Heart right ventricle (tissue), 16 donors: ENCODE measurements at regions of chr1 and their contacts with region 1.

Region 1: GRCh38 chr1:43073490-43074230 is 98.4 kb downstream of the EBNA1BP2 start:
- DNase-seq: peak; percentile 45 to 77
- ATAC-seq: peak; percentile 79 to 94 (median 91)
- H3K4me3 ChIP-seq: no peak overlapping the region
- H3K27ac ChIP-seq: peak overlapping the region in 1 of 10 donors; percentile 30
- H3K4me1 ChIP-seq: peaks cover 0 to 2% (median 0%) of the 10 kb centered on the region in 9 donors
- H3K27me3 ChIP-seq: peaks cover 0 to 5% (median 0%) of the 10 kb centered on the region in 7 donors
- CTCF ChIP-seq: peak; percentile 74 to 92 (median 88)

Region 2: GRCh38 chr1:42576935-42577334 is 496.7 kb before region 1 on chr1:
- intact Hi-C with region 1: loop called in 7 of 10 experiments (anchors 5 to 10 kb)
- DNase-seq: no peak
- ATAC-seq: no peak
- H3K4me3 ChIP-seq: no peak overlapping the region
- H3K27ac ChIP-seq: no peak overlapping the region
- H3K4me1 ChIP-seq: no peaks in the 10 kb centered on the region
- H3K27me3 ChIP-seq: no peaks in the 10 kb centered on the region
- CTCF ChIP-seq: no peak

Region 3: DNA sequence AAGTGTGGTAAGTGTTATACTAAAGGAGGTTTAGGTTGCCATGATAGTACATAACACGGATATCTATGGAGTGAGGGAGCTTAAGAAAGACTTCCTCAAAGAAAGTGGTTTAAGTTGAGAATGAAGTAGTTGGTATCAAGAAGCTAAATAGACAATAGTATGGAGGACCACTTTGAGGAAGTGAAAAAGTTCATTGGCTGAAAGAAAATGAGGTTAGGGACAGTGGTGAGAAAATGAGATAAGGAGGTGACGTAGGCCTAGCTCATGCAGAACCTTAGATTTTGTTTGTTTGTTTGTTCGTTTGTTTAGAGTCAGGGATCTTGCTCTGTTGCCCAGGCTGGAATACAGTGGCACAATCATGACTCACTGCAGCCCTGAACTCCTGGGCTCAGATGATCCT is 487.6 kb before region 1 on chr1:
- intact Hi-C with region 1: loop called in 2 of 10 experiments (anchors 10 kb)
- DNase-seq: no peak
- ATAC-seq: no peak
- H3K4me3 ChIP-seq: no peak overlapping the region
- H3K27ac ChIP-seq: no peak overlapping the region
- H3K4me1 ChIP-seq: no peaks in the 10 kb centered on the region
- H3K27me3 ChIP-seq: no peaks in the 10 kb centered on the region
- CTCF ChIP-seq: no peak

Region 4: GRCh38 chr1:42613803-42614131 is 459.9 kb before region 1 on chr1:
- intact Hi-C with region 1: no loop called
- DNase-seq: no peak
- ATAC-seq: no peak
- H3K4me3 ChIP-seq: no peak overlapping the region
- H3K27ac ChIP-seq: no peak overlapping the region
- H3K4me1 ChIP-seq: no peaks in the 10 kb centered on the region
- H3K27me3 ChIP-seq: no peaks in the 10 kb centered on the region
- CTCF ChIP-seq: no peak

Region 5: GRCh38 chr1:42777852-42778251 is 295.8 kb before region 1 on chr1:
- intact Hi-C with region 1: loop called in 9 of 10 experiments (anchors 1 to 10 kb)
- DNase-seq: no peak
- ATAC-seq: peak in 5 of 8 donors; percentile 59 to 70 (median 63)
- H3K4me3 ChIP-seq: no peak overlapping the region
- H3K27ac ChIP-seq: no peak overlapping the region
- H3K4me1 ChIP-seq: no peaks in the 10 kb centered on the region
- H3K27me3 ChIP-seq: no peaks in the 10 kb centered on the region
- CTCF ChIP-seq: peak; percentile 32 to 68 (median 62)

Region 6: DNA sequence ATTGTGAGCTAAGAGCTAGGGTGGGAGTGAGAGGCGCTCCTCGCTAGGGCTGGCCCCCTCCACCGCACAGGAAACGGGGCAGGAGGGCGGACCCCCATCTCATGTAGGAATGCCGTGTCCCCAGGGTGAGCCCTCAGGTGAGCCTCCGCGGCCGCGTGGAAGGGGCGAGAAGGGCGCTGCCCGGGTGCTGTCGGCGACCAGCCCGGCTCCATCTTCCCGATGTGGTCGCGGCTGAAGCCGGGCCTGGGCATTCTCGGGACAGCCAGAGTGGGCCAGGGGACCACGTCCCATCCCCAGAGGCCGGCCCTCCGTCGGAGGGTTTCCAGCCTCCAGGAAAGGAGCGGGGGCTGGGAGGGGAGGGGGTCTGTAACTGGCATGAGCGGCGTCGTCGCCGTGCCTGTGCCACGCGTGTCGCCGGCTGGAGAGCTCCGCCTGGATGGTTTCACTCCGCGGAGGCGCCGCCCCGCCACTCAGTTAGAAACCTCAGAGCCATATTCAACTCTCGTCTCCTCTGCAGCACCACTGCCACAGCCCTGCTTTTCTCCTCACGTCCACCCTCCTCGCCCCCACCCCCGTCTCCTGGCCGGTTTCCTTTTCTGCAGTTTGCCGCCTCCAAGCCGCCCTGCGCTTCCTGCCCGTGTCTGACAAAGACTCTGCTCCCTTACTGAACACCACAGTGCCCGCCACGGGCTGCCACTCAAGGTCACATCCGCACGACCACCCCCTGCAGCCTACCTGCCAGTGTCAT is 288.5 kb before region 1 on chr1 and contains the start of gene TMEM269:
- intact Hi-C with region 1: loop called in 1 of 10 experiments (anchors 10 kb)
- DNase-seq: peak; percentile 11 to 26
- ATAC-seq: peak; percentile 52 to 64 (median 57)
- H3K4me3 ChIP-seq: peak within 1 kb of the TSS in 9 of 10 donors; percentile 39 to 64 (median 48)
- H3K27ac ChIP-seq: no peak within 1 kb of the TSS
- H3K4me1 ChIP-seq: peaks cover 4 to 20% (median 14%) of the 10 kb centered on the region in 9 donors
- H3K27me3 ChIP-seq: peaks cover 0 to 11% (median 0%) of the 10 kb centered on the region in 7 donors
- CTCF ChIP-seq: no peak
- total RNA-seq, gene TMEM269: 0.07 to 0.09 TPM in 2 of 10 donors, not detected in the others

Region 7: GRCh38 chr1:42913426-42914091 is 160.1 kb before region 1 on chr1:
- intact Hi-C with region 1: loop called (anchors 1 to 2 kb)
- DNase-seq: peak in 1 of 2 donors; percentile 65
- ATAC-seq: peak in 6 of 8 donors; percentile 29 to 81 (median 64)
- H3K4me3 ChIP-seq: no peak overlapping the region
- H3K27ac ChIP-seq: no peak overlapping the region
- H3K4me1 ChIP-seq: no peaks in the 10 kb centered on the region
- H3K27me3 ChIP-seq: peaks cover 0 to 6% (median 0%) of the 10 kb centered on the region in 7 donors
- CTCF ChIP-seq: peak; percentile 60 to 88 (median 78)

Region 8: GRCh38 chr1:43035821-43036741 is 37.6 kb before region 1 on chr1:
- intact Hi-C with region 1: no loop called
- DNase-seq: no peak
- ATAC-seq: no peak
- H3K4me3 ChIP-seq: no peak overlapping the region
- H3K27ac ChIP-seq: no peak overlapping the region
- H3K4me1 ChIP-seq: no peaks in the 10 kb centered on the region
- H3K27me3 ChIP-seq: no peaks in the 10 kb centered on the region
- CTCF ChIP-seq: no peak

Region 9: DNA sequence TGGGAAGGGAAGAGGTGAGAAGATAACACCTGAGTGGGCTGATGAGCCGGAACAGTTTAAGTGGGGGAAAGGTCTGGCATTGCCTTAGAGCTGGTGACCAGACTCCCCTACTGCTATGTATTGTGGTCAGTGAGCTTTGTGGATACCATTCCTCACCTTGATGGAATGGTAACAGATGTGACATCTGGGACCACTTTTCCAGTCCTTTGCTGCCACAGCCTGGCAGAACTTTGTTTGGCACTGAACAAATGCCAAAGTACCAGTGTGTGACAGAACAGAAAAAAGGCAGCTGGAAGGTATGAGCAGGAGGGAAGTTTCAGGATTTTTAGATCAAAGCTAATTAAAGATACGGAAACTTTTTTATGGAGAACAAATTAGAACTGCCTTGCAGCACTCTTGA is 309.8 kb after region 1 on chr1:
- intact Hi-C with region 1: no loop called
- DNase-seq: no peak
- ATAC-seq: peak; percentile 18 to 64 (median 48)
- H3K4me3 ChIP-seq: no peak overlapping the region
- H3K27ac ChIP-seq: no peak overlapping the region
- H3K4me1 ChIP-seq: peaks cover 3 to 35% (median 30%) of the 10 kb centered on the region in 9 donors
- H3K27me3 ChIP-seq: no peaks in the 10 kb centered on the region
- CTCF ChIP-seq: peak in 6 of 9 donors; percentile 26 to 51 (median 46)